Mammary epithelial cell (primary cell): ENCODE measurements at regions of chr10 and their contacts with region 1.

Region 1: GRCh38 chr10:88565072-88565471 is 18.0 kb downstream of the RNLS start:
- DNase-seq: peak; percentile 13
- H3K4me3 ChIP-seq: no peak overlapping the region
- H3K27ac ChIP-seq: no peak overlapping the region
- H3K4me1 ChIP-seq: no peaks in the 10 kb centered on the region
- H3K27me3 ChIP-seq: no peaks in the 10 kb centered on the region
- CTCF ChIP-seq: peak; percentile 40 to 43

Region 2: GRCh38 chr10:88791924-88792323 is 226.9 kb after region 1 on chr10:
- CTCF ChIA-PET with region 1: no interaction called
- dilution Hi-C with region 1: no loop called
- in situ Hi-C with region 1: no loop called
- intact Hi-C with region 1: loop called (anchors 1 kb)
- DNase-seq: peak; percentile 25
- H3K4me3 ChIP-seq: no peak overlapping the region
- H3K27ac ChIP-seq: no peak overlapping the region
- H3K4me1 ChIP-seq: peaks cover 13% of the 10 kb centered on the region
- H3K27me3 ChIP-seq: peaks cover 5% of the 10 kb centered on the region
- CTCF ChIP-seq: peak; percentile 69 to 73

Region 3: DNA sequence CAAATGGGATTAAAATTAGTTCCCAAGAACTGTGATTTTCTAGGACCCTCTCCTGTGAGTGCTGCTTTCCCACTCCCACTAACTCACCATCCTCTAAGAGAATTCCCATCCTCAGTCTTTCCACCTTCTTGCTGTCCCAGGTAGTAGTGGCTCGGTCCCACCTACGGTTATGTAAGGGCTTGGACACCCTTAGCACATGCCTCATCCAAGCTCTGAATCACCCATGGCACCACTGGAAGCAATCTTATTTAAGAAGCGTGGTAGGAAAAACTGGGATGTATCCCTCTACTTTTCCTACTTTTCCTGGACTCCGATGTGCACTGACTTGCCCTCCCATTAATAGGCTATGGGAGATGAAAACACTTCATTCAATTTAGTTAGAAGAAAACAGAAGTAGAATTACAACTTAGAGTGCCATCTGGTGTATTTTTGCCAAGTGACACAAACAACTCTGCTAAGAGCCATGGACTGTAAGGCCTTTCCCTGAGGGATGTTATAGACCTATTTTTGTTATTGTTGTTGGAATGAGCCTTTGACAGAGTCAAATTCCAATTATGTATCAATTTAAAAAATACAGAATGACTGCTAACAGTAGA is 300.3 kb after region 1 on chr10:
- CTCF ChIA-PET with region 1: no interaction called
- dilution Hi-C with region 1: no loop called
- in situ Hi-C with region 1: no loop called
- intact Hi-C with region 1: loop called (anchors 1 kb)
- DNase-seq: peak; percentile 27
- H3K4me3 ChIP-seq: no peak overlapping the region
- H3K27ac ChIP-seq: no peak overlapping the region
- H3K4me1 ChIP-seq: no peaks in the 10 kb centered on the region
- H3K27me3 ChIP-seq: no peaks in the 10 kb centered on the region
- CTCF ChIP-seq: peak; percentile 30 to 58